ENCODE measurements at regions of chr4 and their contacts with region 1.

Region 1: GRCh38 chr4:47933840-47934239 is 19.5 kb upstream of the NFXL1 start:
- DNase-seq: peak; percentile 32
- ATAC-seq: no peak
- H3K4me3 ChIP-seq: no peak overlapping the region
- H3K27ac ChIP-seq: no peak overlapping the region
- H3K4me1 ChIP-seq: peaks cover 8% of the 10 kb centered on the region
- H3K27me3 ChIP-seq: no peaks in the 10 kb centered on the region
- CTCF ChIP-seq: peak; percentile 61
- EP300 ChIP-seq: no peak
- POLR2A ChIP-seq: no peak
- RAD21 ChIP-seq: 0 out of 2 replicates have a peak, but pooled peaks have one; percentile 17

Region 2: GRCh38 chr4:47562297-47562696 is 371.5 kb before region 1 on chr4:
- CTCF ChIA-PET with region 1: no interaction called
- POLR2A ChIA-PET with region 1: no interaction called
- in situ Hi-C with region 1: no loop called
- intact Hi-C with region 1: loop called (anchors 5 kb)
- DNase-seq: no peak
- ATAC-seq: no peak
- H3K4me3 ChIP-seq: no peak overlapping the region
- H3K27ac ChIP-seq: no peak overlapping the region
- H3K4me1 ChIP-seq: peaks cover 31% of the 10 kb centered on the region
- H3K27me3 ChIP-seq: no peaks in the 10 kb centered on the region
- CTCF ChIP-seq: no peak
- EP300 ChIP-seq: no peak
- POLR2A ChIP-seq: no peak
- RAD21 ChIP-seq: no peak

Region 3: GRCh38 chr4:47668810-47669408 is 264.9 kb before region 1 on chr4:
- CTCF ChIA-PET with region 1: interaction called, 5 read pairs
- POLR2A ChIA-PET with region 1: no interaction called
- in situ Hi-C with region 1: no loop called
- intact Hi-C with region 1: loop called (anchors 1 kb)
- DNase-seq: peak; percentile 32
- ATAC-seq: peak; percentile 75
- H3K4me3 ChIP-seq: no peak overlapping the region
- H3K27ac ChIP-seq: no peak overlapping the region
- H3K4me1 ChIP-seq: no peaks in the 10 kb centered on the region
- H3K27me3 ChIP-seq: no peaks in the 10 kb centered on the region
- CTCF ChIP-seq: peak; percentile 59
- EP300 ChIP-seq: no peak
- POLR2A ChIP-seq: no peak
- RAD21 ChIP-seq: no peak

Region 4: DNA sequence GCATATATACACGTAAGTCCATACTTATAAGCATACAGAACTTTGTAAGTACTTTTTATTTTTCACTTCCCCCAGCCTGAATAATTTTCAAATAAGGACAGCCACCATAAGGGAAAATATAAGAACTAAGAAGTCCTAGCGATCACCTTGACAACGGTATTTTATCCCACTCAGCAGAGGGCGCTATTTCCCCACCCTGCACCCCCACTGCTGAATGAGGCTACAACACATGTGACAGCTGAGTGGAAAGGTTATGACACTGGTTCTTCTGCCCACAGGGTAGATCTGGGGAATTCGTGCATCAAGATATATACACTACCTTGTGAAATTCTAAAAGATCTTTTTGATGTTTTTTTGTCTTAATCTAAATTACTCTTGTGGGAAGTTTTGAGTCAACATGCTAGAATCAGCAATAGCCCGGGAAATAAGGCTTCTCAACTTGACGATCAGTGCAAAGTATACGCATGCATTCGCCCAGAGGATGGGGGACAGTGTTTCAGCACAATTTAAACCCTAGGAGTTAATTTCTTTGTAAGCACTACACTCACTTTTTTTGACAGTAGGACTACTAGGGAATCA is 247.5 kb before region 1 on chr4:
- CTCF ChIA-PET with region 1: interaction called, 12 read pairs
- POLR2A ChIA-PET with region 1: no interaction called
- in situ Hi-C with region 1: loop called (anchors 5 kb)
- intact Hi-C with region 1: loop called (anchors 1 kb)
- DNase-seq: peak; percentile 35
- ATAC-seq: peak; percentile 94
- H3K4me3 ChIP-seq: no peak overlapping the region
- H3K27ac ChIP-seq: no peak overlapping the region
- H3K4me1 ChIP-seq: no peaks in the 10 kb centered on the region
- H3K27me3 ChIP-seq: no peaks in the 10 kb centered on the region; a peak in 1 of 5 replicates
- CTCF ChIP-seq: peak; percentile 85
- EP300 ChIP-seq: no peak
- POLR2A ChIP-seq: no peak
- RAD21 ChIP-seq: peak; percentile 43; the same call in 1 of the 2 replicates

Region 5: DNA sequence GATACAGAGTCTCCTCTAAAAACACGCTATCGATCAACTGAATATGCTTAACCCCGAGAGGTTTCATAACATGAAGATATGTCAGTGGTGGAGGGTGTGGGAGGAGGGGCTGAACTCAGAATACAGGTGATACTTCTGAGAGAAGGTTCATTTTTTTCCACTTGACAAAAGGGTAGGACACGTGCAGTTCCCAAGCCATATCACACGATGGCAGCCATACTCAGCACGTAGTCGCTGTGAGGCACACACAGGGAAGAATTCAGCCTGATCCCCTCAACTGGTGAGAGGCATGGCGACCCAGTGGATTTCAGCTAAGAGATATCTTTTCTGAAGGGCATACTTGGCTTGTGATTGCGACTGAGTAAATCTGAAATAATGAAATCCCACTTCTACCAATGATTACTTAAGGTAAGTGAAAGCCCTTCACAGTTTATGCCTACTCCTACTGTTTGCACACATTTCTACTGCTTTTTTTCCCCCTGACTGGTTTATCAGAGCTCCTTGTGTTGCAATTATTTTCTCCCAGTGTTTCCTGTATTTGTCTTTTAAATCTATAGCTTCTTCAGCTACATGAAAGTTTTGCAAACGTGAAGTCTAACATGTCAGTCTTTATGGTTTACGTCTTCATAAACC is 229.0 kb before region 1 on chr4:
- CTCF ChIA-PET with region 1: interaction called, 27 read pairs
- POLR2A ChIA-PET with region 1: no interaction called
- in situ Hi-C with region 1: no loop called
- intact Hi-C with region 1: loop called (anchors 1 kb)
- DNase-seq: peak; percentile 58
- ATAC-seq: peak; percentile 100
- H3K4me3 ChIP-seq: peak overlapping the region in 2 of 3 experiments; percentile 13 to 20; a peak in 3 of 6 replicates
- H3K27ac ChIP-seq: no peak overlapping the region
- H3K4me1 ChIP-seq: peaks cover 23% of the 10 kb centered on the region
- H3K27me3 ChIP-seq: peaks cover 0 to 1% of the 10 kb centered on the region in 2 experiments; a peak in 1 of 5 replicates
- CTCF ChIP-seq: peak; percentile 89
- EP300 ChIP-seq: no peak
- POLR2A ChIP-seq: no peak
- RAD21 ChIP-seq: peak; percentile 72

Region 6: DNA sequence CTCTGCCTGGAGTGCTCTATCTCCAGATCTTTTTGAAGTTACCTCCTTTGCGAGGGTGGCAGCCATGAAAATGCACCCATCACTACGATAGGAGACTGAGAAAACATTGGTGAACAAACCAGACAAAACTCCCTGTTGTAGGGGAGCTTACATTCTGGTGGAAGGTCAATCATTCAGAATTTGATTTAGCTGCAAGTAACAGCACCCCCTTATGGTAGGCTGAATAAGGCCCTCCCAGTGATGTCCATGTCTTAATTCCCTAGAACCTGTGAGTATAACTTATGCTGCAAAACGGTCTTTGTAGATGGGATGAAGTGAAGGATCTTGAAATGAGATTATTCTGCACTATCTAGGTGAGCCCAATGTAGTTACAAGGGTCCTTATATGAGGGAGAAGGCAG is 341.4 kb after region 1 on chr4:
- CTCF ChIA-PET with region 1: no interaction called
- POLR2A ChIA-PET with region 1: no interaction called
- in situ Hi-C with region 1: no loop called
- intact Hi-C with region 1: no loop called
- DNase-seq: peak; percentile 15
- ATAC-seq: peak; percentile 70
- H3K4me3 ChIP-seq: no peak overlapping the region
- H3K27ac ChIP-seq: no peak overlapping the region
- H3K4me1 ChIP-seq: 0 out of 2 replicates have a peak, but pooled peaks cover 4% of the 10 kb centered on the region
- H3K27me3 ChIP-seq: peaks cover 0 to 7% of the 10 kb centered on the region in 2 experiments; a peak in 1 of 5 replicates
- CTCF ChIP-seq: peak; percentile 44
- EP300 ChIP-seq: no peak
- POLR2A ChIP-seq: no peak
- RAD21 ChIP-seq: no peak